ENCODE measurements at regions of chr17 and their contacts with region 1.

Region 1: GRCh38 chr17:74790161-74791054 is 14.3 kb upstream of the NAT9 start:
- DNase-seq: no peak
- H3K4me3 ChIP-seq: no peak overlapping the region
- H3K27ac ChIP-seq: no peak overlapping the region
- H3K4me1 ChIP-seq: no peaks in the 10 kb centered on the region; a peak in 1 of 4 replicates
- H3K27me3 ChIP-seq: no peaks in the 10 kb centered on the region
- CTCF ChIP-seq: no peak
- EP300 ChIP-seq: no peak
- RAD21 ChIP-seq: no peak

Region 2: DNA sequence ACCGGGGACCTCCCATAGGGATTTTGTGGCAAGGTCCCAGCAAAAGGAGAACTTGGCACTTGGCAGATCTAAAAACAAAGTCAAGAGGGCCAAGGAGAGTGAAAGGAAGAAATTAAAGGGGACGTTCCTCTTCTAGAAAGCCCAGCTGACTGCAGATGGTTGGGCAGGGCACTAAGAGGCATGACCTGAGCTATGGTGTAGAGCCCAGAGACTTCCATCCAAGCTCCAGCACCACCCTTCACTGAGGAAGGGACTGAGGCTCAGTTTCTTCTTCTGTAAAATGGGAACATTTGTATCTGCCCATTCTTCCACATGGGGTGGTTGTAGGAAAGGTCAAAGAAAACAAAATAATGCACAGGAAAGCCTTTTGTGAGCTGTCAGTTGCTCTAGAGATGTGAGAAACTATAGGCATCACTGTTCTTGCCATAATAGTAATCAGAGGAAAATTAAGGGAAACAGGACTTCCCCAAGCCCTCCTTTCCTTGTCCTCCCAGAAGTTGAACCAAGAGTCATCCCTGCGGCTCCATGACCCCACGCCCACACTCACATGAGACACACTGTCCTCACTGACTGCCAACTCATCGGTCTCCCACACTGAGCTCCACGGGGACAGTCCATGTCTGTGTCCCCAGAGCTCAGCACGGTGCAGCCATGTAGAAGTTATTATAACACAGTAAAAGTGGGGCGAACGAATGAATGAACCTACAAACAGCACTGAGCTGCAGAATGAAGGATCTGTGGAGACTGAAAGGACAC is 88.1 kb before region 1 on chr17:
- CTCF ChIA-PET with region 1: no interaction called
- POLR2A ChIA-PET with region 1: no interaction called
- DNase-seq: no peak
- H3K4me3 ChIP-seq: no peak overlapping the region
- H3K27ac ChIP-seq: no peak overlapping the region
- H3K4me1 ChIP-seq: no peaks in the 10 kb centered on the region
- H3K27me3 ChIP-seq: no peaks in the 10 kb centered on the region
- CTCF ChIP-seq: no peak
- EP300 ChIP-seq: no peak
- RAD21 ChIP-seq: no peak

Region 3: DNA sequence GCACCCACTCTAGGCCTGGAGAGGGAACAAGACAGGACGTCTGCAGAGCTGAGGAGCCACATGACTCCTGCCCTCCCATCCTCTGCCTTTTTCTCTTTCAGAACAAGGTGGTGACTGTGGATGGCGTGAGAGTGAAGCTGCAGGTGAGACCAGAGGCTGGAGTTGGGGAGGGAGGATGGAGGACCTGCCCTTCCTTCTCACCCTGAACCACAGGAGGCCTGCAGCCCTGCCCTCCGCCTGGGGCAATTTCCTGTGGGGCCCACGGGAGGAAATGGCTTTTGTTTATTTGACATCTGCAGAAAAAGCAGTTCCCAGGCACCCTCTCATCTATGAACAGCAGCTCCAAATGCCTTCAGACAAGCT is 48.3 kb before region 1 on chr17:
- CTCF ChIA-PET with region 1: interaction called, 1,361 read pairs
- POLR2A ChIA-PET with region 1: no interaction called
- DNase-seq: no peak
- H3K4me3 ChIP-seq: no peak overlapping the region
- H3K27ac ChIP-seq: no peak overlapping the region
- H3K4me1 ChIP-seq: peaks cover 0 to 3% of the 10 kb centered on the region in 2 experiments; a peak in 1 of 4 replicates
- H3K27me3 ChIP-seq: peaks cover 22% of the 10 kb centered on the region
- CTCF ChIP-seq: no peak
- EP300 ChIP-seq: no peak
- RAD21 ChIP-seq: no peak

Region 4: DNA sequence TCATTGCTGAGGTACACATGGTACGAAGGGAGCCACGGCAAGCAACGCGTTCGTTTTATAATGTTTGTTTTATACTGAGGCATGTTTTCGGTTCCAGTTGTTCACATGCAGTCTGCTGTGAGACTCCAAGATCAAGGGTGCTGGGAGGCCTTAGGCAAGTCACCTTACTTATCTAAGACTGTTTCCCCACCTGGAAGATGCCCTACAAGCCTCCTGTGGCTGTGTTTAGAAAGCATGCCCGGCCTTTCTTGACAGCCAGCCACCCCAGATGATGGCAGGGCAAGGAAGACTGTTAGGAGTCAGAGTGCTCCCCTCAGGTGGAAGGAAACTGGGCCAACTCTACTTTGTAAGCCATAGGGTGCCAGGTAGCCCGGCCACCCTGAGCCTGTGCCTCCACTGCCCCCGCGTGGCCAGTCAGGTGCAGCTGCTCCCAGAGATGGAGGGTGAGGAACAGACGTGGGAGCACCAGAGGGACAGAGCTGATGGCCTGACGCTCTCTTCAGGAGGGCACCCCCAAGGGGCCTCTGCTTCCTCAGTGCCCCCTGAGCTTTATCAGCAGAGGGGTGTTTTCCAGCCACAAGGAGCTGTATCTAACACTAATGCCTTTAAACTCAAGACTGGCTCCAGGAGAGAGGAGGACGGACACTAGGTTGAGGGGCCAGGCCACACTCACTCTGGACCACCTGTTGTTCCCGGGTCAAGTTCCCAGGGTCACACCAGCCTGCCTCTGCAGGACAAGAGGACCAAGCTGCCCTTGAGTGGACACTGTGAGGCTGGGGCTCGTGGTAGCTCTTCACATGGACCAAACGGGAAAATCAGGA is 19.7 kb before region 1 on chr17:
- CTCF ChIA-PET with region 1: interaction called, 197 read pairs
- POLR2A ChIA-PET with region 1: no interaction called
- DNase-seq: peak; percentile 91
- H3K4me3 ChIP-seq: no peak overlapping the region
- H3K27ac ChIP-seq: no peak overlapping the region
- H3K4me1 ChIP-seq: peaks cover 23 to 29% of the 10 kb centered on the region in 2 experiments; a peak in 3 of 4 replicates
- H3K27me3 ChIP-seq: no peaks in the 10 kb centered on the region
- CTCF ChIP-seq: peak; percentile 85
- EP300 ChIP-seq: no peak
- RAD21 ChIP-seq: peak; percentile 98

Region 5: GRCh38 chr17:74776044-74776977 is 14.1 kb before region 1 on chr17 and contains the start of gene NAT9:
- CTCF ChIA-PET with region 1: interaction called, 197 read pairs
- POLR2A ChIA-PET with region 1: no interaction called
- DNase-seq: peak; percentile 100
- H3K4me3 ChIP-seq: peak within 1 kb of the TSS; percentile 87 to 90
- H3K27ac ChIP-seq: peak within 1 kb of the TSS; percentile 72 to 81
- H3K4me1 ChIP-seq: peaks cover 13 to 16% of the 10 kb centered on the region in 2 experiments; a peak in 3 of 4 replicates
- H3K27me3 ChIP-seq: no peaks in the 10 kb centered on the region
- CTCF ChIP-seq: no peak
- EP300 ChIP-seq: no peak
- RAD21 ChIP-seq: no peak
- polyA plus RNA-seq, gene NAT9: 117 and 190 TPM in 2 replicates

Region 6: DNA sequence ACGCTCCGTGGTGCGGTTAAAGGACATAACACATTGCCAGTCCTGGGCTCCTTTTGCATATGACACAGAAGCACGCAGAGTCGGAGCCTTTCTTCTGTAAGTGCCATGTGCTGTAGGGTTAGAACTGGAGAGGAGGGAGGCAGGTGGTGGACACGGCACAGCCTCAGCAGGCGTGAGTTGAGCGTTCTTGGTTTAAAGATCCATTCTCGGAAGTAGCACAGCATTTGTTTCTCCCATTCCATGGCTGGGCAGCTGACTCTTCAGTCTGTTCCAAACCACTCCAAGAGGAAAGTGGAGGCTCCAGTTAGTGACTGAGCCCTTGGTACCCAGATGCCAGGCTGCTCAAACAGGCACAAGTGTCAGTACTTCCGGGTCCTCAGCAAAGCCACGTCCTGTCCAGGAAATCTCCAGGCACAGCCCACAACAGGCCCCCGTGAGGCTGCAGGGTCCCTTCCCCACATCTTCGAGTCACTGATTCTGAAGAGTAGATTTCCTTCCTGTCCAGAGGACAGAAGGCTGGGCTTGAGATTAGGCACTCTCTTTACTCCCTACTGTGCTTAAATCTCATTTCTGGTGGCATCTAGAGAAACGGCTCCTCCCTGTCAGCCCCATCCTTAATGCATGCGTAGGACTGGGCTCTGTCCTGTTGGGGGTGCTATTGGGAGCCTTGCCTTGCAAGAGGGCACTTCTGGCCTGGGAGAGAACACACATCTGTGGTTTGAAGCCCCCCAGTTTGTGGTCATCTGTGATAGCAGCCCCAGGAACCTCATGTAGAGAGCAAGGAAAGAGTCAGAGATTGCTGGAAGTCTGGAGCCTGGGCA is 25.4 kb after region 1 on chr17:
- CTCF ChIA-PET with region 1: interaction called, 453 read pairs
- POLR2A ChIA-PET with region 1: no interaction called
- DNase-seq: no peak
- H3K4me3 ChIP-seq: no peak overlapping the region
- H3K27ac ChIP-seq: no peak overlapping the region
- H3K4me1 ChIP-seq: no peaks in the 10 kb centered on the region; a peak in 1 of 4 replicates
- H3K27me3 ChIP-seq: no peaks in the 10 kb centered on the region
- CTCF ChIP-seq: peak; percentile 47
- EP300 ChIP-seq: no peak
- RAD21 ChIP-seq: no peak

Region 7: GRCh38 chr17:74822939-74823367 is 32.5 kb after region 1 on chr17:
- CTCF ChIA-PET with region 1: interaction called, 74 read pairs
- POLR2A ChIA-PET with region 1: no interaction called
- DNase-seq: no peak
- H3K4me3 ChIP-seq: no peak overlapping the region
- H3K27ac ChIP-seq: no peak overlapping the region
- H3K4me1 ChIP-seq: no peaks in the 10 kb centered on the region; a peak in 1 of 4 replicates
- H3K27me3 ChIP-seq: no peaks in the 10 kb centered on the region
- CTCF ChIP-seq: no peak
- EP300 ChIP-seq: no peak
- RAD21 ChIP-seq: no peak

Region 8: GRCh38 chr17:74833501-74834377 is 43.3 kb after region 1 on chr17:
- CTCF ChIA-PET with region 1: interaction called, 3,869 read pairs
- POLR2A ChIA-PET with region 1: no interaction called
- DNase-seq: peak; percentile 74
- H3K4me3 ChIP-seq: no peak overlapping the region
- H3K27ac ChIP-seq: no peak overlapping the region
- H3K4me1 ChIP-seq: peaks cover 12 to 15% of the 10 kb centered on the region in 2 experiments; a peak in 3 of 4 replicates
- H3K27me3 ChIP-seq: no peaks in the 10 kb centered on the region
- CTCF ChIP-seq: no peak
- EP300 ChIP-seq: no peak
- RAD21 ChIP-seq: no peak

Measured in SK-N-SH (cell line).